Activated B cell treated with CpG ODN at 0.5 μM for 24 hours (primary cell): ENCODE measurements at regions of chr2 and their contacts with region 1.

Region 1: DNA sequence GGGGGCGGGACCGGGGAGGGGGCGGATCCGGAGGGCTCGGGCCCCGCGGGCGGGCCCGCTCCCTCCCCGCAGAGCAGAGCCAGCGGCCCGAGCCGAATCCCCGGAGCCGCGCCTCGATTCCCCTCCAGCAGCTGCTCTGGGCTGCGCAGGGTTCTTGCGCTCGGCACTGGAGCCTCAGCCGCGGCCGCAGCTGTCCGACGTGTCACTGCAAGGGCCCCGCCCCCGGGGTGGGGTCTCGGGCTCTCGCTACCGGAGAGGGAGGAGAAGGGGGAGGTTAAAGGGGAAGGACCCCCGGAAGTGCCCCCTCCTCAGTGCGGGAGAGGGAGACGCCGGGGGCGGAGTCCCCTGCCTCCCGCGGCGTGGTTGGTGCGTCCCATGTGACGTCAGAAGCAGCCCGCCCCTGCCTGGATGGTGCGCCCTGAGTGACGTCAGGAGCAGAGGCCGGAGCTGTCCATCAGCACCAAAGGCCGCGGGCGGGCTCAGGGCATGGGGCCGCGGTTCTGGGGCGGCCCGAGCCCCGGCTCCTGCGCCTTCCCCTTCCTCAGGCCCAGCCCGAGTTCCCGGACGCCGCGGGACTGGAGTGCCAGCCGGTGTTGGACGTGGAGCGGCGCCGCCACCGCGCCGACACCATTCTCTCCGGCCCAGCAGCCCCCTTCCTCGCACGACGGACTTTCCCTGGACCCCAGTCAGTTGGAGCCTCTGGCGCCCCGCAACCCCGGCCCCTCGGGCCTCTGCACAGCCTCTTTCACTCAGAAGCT is at the starts of genes CHPF and TMEM198:
- DNase-seq: peak; percentile 81
- ATAC-seq: peak; percentile 84
- H3K4me3 Mint-ChIP-seq: peak within 1 kb of the TSS; percentile 78
- H3K27ac Mint-ChIP-seq: no peak within 1 kb of the TSS
- H3K4me1 Mint-ChIP-seq: peaks cover 22% of the 10 kb centered on the region
- H3K27me3 Mint-ChIP-seq: peaks cover 42% of the 10 kb centered on the region
- CTCF ChIP-seq: no peak
- total RNA-seq, gene CHPF: 4.1 and 4.7 TPM in 2 replicates
- total RNA-seq, gene TMEM198: 0.86 and 1.2 TPM in 2 replicates

Region 2: DNA sequence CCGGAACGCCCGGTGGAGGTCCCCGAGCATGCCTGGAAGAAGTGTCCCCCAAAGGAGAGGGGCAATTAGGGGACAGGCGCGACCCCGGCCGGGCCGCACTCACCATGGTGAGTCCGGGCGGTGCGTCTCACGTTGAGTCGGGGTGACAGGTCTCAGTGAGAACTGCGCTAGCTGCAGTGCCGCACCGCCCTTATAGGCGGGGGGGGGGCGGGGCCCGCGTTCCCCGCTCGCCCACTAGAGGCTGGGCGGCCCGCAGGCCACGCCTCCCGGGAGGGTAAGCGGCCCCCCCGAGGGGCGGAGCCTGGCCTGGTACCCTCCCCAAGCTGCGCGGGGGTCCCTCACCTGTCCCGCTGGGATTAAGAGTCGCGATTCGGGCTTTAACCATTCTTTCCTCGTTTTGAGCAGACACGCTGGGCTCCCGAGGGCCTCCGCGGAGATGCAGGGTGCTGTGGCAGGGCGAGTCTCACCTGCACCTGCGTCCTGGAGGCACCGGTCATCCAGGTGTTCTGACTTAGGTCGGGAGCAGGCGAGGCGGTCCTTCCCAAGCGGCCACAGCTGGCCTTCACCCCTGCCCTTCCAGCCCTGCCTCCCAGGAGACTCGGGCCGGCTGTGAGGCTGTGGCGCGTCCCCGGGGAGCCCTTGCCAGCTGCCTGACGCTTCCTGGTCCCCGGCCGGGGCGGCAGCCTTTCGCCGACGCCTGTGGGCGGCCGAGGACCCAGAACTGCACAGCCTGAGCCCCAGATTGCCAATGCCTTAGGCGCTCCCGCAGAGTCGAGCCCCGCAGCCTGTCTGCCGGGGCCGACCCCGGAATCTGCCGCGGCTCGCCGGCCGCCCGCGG is 289.8 kb before region 1 on chr2 and contains the start of gene TUBA4A:
- CTCF ChIA-PET with region 1: no interaction called
- POLR2A ChIA-PET with region 1: no interaction called
- intact Hi-C with region 1: loop called (anchors 5 kb)
- DNase-seq: peak; percentile 90
- ATAC-seq: peak; percentile 69
- H3K4me3 Mint-ChIP-seq: peak within 1 kb of the TSS; percentile 82
- H3K27ac Mint-ChIP-seq: peak within 1 kb of the TSS; percentile 98
- H3K4me1 Mint-ChIP-seq: peaks cover 53% of the 10 kb centered on the region
- H3K27me3 Mint-ChIP-seq: no peaks in the 10 kb centered on the region
- CTCF ChIP-seq: no peak
- total RNA-seq, gene TUBA4A: 184 and 192 TPM in 2 replicates

Region 3: DNA sequence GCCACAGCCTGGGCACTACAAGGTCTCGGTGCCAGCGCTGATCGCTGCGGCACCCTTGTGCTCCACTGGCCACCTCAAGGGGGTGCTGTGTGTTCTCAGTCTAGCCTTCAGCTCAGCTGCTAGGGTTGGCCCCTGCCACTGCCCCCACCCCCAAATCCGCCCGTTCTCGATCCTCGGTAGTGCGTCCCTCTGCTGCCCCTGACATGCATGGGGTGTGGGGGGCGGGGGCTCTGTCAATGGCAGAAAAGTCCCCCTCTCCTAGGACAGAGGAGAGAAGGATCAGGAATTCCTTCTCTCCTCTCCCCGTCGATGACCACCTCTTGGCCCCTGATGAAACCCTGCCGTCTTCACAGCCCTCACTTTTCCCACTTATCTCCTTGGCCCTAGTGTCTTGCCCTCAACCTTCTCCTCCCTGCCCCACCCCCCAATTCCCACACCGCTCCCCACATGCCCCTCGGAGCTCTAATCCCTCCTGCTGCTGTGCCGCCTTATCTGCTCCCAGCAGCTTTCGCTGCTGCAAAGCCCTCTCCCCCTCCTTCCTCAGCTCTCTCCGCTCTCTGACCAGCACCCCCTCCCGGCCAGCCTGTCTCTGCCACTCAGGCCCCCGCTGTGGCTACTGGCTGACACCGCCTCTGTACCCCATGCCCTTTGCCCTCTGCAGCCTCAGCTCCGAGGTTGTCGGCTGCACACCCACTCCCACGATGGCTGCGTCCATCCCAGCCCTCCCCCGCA is 33.8 kb before region 1 on chr2:
- CTCF ChIA-PET with region 1: interaction called, 5 read pairs
- POLR2A ChIA-PET with region 1: interaction called, 6 read pairs
- intact Hi-C with region 1: loop called (anchors 1 kb)
- DNase-seq: peak; percentile 37
- ATAC-seq: peak; percentile 76
- H3K4me3 Mint-ChIP-seq: peak overlapping the region; percentile 38
- H3K27ac Mint-ChIP-seq: no peak overlapping the region
- H3K4me1 Mint-ChIP-seq: peaks cover 22% of the 10 kb centered on the region
- H3K27me3 Mint-ChIP-seq: peaks cover 49% of the 10 kb centered on the region
- CTCF ChIP-seq: no peak

Region 4: GRCh38 chr2:219597552-219598307 is 54.0 kb after region 1 on chr2 and contains the start of gene STK11IP:
- CTCF ChIA-PET with region 1: interaction called, 4 read pairs
- POLR2A ChIA-PET with region 1: interaction called, 14 read pairs
- intact Hi-C with region 1: loop called (anchors 1 kb)
- DNase-seq: peak; percentile 83
- ATAC-seq: peak; percentile 91
- H3K4me3 Mint-ChIP-seq: peak within 1 kb of the TSS; percentile 96
- H3K27ac Mint-ChIP-seq: peak within 1 kb of the TSS; percentile 97
- H3K4me1 Mint-ChIP-seq: peaks cover 23% of the 10 kb centered on the region
- H3K27me3 Mint-ChIP-seq: peaks cover 13% of the 10 kb centered on the region
- CTCF ChIP-seq: no peak
- total RNA-seq, gene STK11IP: 43.3 and 53.6 TPM in 2 replicates

Region 5: DNA sequence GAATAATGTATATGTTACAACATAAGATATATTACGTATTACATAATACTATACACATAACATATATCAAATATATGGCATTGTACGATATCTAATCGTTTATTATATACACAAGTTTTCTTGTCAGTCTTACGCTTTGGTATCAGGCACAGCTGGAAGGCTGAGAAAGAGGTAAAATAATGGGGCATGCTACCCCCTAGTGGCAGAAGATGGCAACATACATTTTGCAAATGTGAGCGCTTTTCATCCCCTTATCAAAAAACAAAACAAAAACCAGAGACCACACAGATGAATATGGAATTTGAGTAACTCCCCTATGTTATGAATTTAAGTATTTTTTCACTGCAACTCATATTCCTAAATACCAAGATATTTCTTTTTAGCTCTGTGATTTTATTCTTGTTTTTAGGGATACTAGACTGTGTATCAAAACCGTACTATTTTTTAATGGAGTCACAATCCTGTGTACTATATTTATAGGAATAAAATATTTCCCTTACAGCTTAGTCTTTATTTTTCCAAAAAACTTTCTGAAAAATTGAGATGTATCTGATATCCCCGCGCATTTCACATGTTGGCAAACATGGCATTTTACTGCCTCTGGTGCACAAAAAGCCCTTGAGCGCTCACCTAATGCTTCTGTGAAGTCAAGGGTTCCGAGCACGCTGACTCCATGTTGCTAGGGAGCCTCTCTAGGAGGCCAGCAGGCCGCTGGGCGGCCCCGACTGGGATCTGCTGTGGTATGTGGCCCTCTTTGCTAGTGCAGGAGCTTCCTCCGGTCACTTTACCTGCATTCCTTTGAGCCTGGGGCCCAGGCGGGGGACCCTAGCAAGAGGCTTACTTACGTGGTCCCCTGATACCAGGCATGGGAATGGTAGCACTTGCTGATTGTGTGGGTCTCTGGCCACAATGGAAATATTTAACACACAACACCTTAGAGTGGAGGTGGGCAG is 146.2 kb after region 1 on chr2:
- CTCF ChIA-PET with region 1: interaction called, 5 read pairs
- POLR2A ChIA-PET with region 1: interaction called, 3 read pairs
- intact Hi-C with region 1: loop called (anchors 1 kb)
- DNase-seq: no peak
- ATAC-seq: peak; percentile 49
- H3K4me3 Mint-ChIP-seq: no peak overlapping the region
- H3K27ac Mint-ChIP-seq: no peak overlapping the region
- H3K4me1 Mint-ChIP-seq: peaks cover 8% of the 10 kb centered on the region
- H3K27me3 Mint-ChIP-seq: peaks cover 37% of the 10 kb centered on the region
- CTCF ChIP-seq: peak; percentile 57